ENCODE measurements at regions of chr5 and their contacts with region 1.

Region 1: GRCh38 chr5:128201065-128201926 is 117.7 kb downstream of the SLC12A2 start:
- DNase-seq: peak; percentile 7
- H3K4me3 ChIP-seq: peak overlapping the region in 2 of 4 donors; percentile 24 to 46
- H3K27ac ChIP-seq: no peak overlapping the region
- H3K4me1 ChIP-seq: peaks cover 3 to 31% (median 8%) of the 10 kb centered on the region in 3 donors
- H3K27me3 ChIP-seq: peaks cover 0 to 7% (median 0%) of the 10 kb centered on the region in 4 donors
- CTCF ChIP-seq: peak; percentile 79 to 95 (median 90)
- POLR2A ChIP-seq: no peak

Region 2: GRCh38 chr5:127564002-127564769 is 637.1 kb before region 1 on chr5:
- intact Hi-C with region 1: loop called (anchors 5 kb)
- DNase-seq: no peak
- H3K4me3 ChIP-seq: no peak overlapping the region
- H3K27ac ChIP-seq: no peak overlapping the region
- H3K4me1 ChIP-seq: peaks cover 0 to 16% (median 0%) of the 10 kb centered on the region in 3 donors
- H3K27me3 ChIP-seq: peaks cover 0 to 2% (median 0%) of the 10 kb centered on the region in 4 donors
- CTCF ChIP-seq: peak; percentile 34 to 78 (median 61)
- POLR2A ChIP-seq: no peak

Region 3: GRCh38 chr5:127757576-127757975 is 443.7 kb before region 1 on chr5:
- intact Hi-C with region 1: loop called (anchors 5 kb)
- DNase-seq: no peak
- H3K4me3 ChIP-seq: no peak overlapping the region
- H3K27ac ChIP-seq: no peak overlapping the region
- H3K4me1 ChIP-seq: no peaks in the 10 kb centered on the region
- H3K27me3 ChIP-seq: no peaks in the 10 kb centered on the region
- CTCF ChIP-seq: peak in 5 of 6 experiments; percentile 38 to 72 (median 43)
- POLR2A ChIP-seq: no peak